ENCODE measurements at regions of chr3 and their contacts with region 1.

Region 1: GRCh38 chr3:188061133-188061532 is 92.8 kb upstream of the LPP start:
- DNase-seq: peak; percentile 38
- H3K4me3 Mint-ChIP-seq: peak overlapping the region; percentile 61
- H3K27ac Mint-ChIP-seq: peak overlapping the region; percentile 87
- H3K4me1 Mint-ChIP-seq: peaks cover 53% of the 10 kb centered on the region
- H3K27me3 Mint-ChIP-seq: no peaks in the 10 kb centered on the region

Region 2: DNA sequence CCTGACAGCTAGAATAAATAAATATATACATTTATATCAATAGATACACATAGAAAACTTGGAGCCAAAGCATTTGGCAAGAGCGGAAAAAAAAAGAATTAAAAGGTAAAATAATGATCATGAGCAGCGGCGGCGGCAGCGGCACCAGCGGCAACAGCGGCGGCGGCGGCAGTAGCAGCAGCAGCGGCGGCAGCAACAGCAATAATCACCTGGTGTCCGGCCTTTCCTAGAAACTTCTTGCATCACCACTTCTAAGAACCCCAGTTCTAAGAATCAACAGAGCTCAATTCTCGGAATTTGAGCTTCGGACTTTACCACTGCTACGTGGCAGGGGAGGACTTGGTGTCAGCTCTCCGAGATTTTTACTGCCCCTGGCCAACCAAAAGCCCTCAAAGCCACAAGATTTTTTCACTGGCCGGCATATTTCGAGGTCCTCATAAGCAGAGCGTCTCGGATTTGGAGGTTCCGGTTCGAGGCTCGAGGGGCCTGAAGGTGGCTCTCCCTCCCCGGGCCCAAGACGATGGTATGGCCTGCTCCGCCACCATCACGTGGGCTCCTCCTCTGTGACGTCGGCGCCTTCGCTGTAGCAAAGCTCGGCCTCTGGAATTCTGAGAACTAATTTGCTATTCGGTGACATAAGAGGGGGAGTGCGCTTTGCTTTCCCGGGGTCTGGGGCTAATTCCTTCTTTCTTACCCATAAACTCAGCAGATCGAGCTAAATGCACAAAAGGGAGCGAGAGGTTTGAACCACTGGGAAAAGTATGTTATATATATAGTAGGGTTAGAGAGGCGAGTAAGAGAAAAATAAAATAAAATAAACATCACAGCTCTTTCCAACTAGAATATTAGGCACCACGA is 315.7 kb before region 1 on chr3 and contains the start of gene BCL6:
- intact Hi-C with region 1: loop called (anchors 1 kb)
- DNase-seq: peak; percentile 88
- H3K4me3 Mint-ChIP-seq: peak within 1 kb of the TSS; percentile 96
- H3K27ac Mint-ChIP-seq: peak within 1 kb of the TSS; percentile 98
- H3K4me1 Mint-ChIP-seq: peaks cover 73% of the 10 kb centered on the region
- H3K27me3 Mint-ChIP-seq: no peaks in the 10 kb centered on the region
- total RNA-seq, gene BCL6: 38.8 and 42.1 TPM in 2 replicates

Region 3: DNA sequence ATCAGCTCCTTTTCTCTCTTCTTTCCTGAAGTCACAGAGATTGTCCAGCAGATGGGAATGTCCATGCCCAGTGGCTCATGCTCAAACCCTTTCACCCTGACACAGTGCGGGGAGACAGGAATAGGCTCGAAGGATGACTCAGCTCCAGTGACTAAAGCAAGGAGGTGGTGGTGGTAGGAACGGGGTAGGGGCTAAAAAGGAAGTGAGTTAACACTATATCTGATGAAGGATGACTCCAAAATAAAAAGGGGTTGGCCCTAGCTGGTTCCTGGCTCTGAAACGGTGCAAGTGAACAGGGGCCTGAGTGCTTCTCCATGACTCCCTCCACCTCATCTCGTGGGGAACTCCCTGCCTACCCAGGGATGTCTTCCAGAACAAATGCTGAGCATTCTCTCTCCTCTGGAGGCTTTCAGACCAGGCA is 74.6 kb before region 1 on chr3:
- intact Hi-C with region 1: loop called (anchors 1 kb)
- DNase-seq: peak; percentile 34
- H3K4me3 Mint-ChIP-seq: peak overlapping the region; percentile 21
- H3K27ac Mint-ChIP-seq: peak overlapping the region; percentile 82
- H3K4me1 Mint-ChIP-seq: peaks cover 70% of the 10 kb centered on the region
- H3K27me3 Mint-ChIP-seq: no peaks in the 10 kb centered on the region

Region 4: DNA sequence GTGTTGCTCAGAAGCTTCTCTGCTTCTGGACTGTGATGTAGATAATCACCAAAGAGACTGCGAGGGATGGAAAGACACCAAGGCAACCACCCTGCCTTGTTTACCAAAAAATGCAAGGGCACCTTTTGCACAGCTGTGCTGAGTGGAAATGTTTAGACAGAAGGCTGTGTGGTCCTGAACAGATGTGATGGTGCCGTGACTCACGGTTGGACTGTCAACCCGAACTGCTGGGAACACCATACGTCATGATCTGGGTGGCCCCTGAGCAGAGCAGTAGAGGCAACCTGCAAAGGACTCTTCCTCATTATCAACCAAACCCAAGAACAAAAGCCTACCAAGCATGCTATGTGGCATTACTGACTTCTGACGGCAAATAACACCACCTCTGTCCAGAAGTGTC is 31.5 kb after region 1 on chr3:
- intact Hi-C with region 1: loop called (anchors 1 kb)
- DNase-seq: no peak
- H3K4me3 Mint-ChIP-seq: no peak overlapping the region
- H3K27ac Mint-ChIP-seq: peak overlapping the region; percentile 49
- H3K4me1 Mint-ChIP-seq: peaks cover 14% of the 10 kb centered on the region
- H3K27me3 Mint-ChIP-seq: peaks cover 2% of the 10 kb centered on the region

Region 5: GRCh38 chr3:188257384-188258026 is 196.4 kb after region 1 on chr3:
- intact Hi-C with region 1: loop called (anchors 1 kb)
- DNase-seq: no peak
- H3K4me3 Mint-ChIP-seq: no peak overlapping the region
- H3K27ac Mint-ChIP-seq: peak overlapping the region; percentile 63
- H3K4me1 Mint-ChIP-seq: peaks cover 62% of the 10 kb centered on the region
- H3K27me3 Mint-ChIP-seq: peaks cover 2% of the 10 kb centered on the region

Region 6: DNA sequence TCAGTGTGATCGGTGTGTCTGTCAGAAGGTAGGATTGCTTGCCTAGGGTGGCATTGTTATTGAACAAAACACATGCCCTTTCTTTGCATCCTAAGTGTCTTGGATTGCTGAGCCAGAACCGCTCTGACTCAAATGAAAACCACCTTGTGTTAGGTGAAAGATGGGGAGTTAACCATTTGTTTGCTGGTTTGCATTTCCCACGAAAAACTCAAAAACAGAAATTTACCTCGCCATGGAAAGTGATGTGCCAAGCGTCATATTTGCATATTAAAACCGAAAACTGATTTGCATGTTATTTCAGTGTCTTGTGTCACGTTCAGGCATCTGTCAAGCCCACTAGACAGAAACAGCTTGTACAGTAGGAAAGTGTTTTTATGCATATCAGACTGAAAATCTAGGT is 636.0 kb after region 1 on chr3:
- intact Hi-C with region 1: loop called (anchors 1 kb)
- DNase-seq: no peak
- H3K4me3 Mint-ChIP-seq: no peak overlapping the region
- H3K27ac Mint-ChIP-seq: peak overlapping the region; percentile 18
- H3K4me1 Mint-ChIP-seq: peaks cover 36% of the 10 kb centered on the region
- H3K27me3 Mint-ChIP-seq: peaks cover 5% of the 10 kb centered on the region

Measured in activated T-helper 1 cell treated with anti-CD3 and anti-CD28 coated beads, Interleukin-12 subunit alpha, Interleukin-12 subunit beta, Interleukin-2, Interleukin-4 antibody, amounts not matched to agents 30 ng/mL and 10 ng/mL and 1 ng/mL, durations not matched to agents 14 hours and 24 hours and 36 hours (primary cell).